ENCODE measurements at regions of chr1 and their contacts with region 1.

Region 1: DNA sequence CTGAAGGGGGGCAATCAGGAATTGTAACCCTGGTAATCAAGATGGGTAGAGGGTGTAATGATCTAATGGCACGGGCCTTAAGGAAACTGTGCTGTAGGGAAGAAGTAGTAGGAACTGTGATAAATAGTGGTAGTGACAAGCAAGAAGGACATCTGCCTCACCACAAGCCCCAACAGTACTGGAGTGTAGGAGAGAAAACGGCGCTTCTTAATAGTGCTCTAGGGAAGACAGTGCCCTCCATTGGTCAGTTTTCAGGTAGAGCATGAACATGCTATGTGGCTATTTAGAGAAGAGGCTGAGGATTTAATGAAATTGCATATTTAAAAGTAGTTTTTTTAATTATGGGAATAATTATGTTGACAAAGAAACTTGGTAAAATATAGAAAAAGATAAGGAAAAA is 32.2 kb downstream of the SLC30A7 start:
- DNase-seq: no peak
- ATAC-seq: peak in 1 of 4 donors; percentile 48
- H3K4me3 ChIP-seq: no peak overlapping the region
- H3K27ac ChIP-seq: peak overlapping the region in 1 of 12 donors; percentile 77
- H3K4me1 ChIP-seq: peaks cover 0 to 21% (median 0%) of the 10 kb centered on the region in 12 donors
- H3K27me3 ChIP-seq: no peaks in the 10 kb centered on the region
- CTCF ChIP-seq: peak in 3 of 12 donors; percentile 8 to 23 (median 21)
- POLR2A ChIP-seq: no peak

Region 2: GRCh38 chr1:101136739-101137138 is 208.6 kb after region 1 on chr1:
- intact Hi-C with region 1: loop called in 4 of 10 experiments (anchors 5 to 10 kb)
- DNase-seq: no peak
- ATAC-seq: peak; percentile 34 to 68 (median 59)
- H3K4me3 ChIP-seq: no peak overlapping the region
- H3K27ac ChIP-seq: peak overlapping the region in 3 of 12 donors; percentile 23 to 33 (median 25)
- H3K4me1 ChIP-seq: peaks cover 0 to 38% (median 21%) of the 10 kb centered on the region in 12 donors
- H3K27me3 ChIP-seq: no peaks in the 10 kb centered on the region
- CTCF ChIP-seq: peak in 9 of 12 donors; percentile 22 to 57 (median 43)
- POLR2A ChIP-seq: no peak

Region 3: GRCh38 chr1:101144671-101145448 is 216.7 kb after region 1 on chr1:
- intact Hi-C with region 1: loop called in 1 of 10 experiments (anchors 5 kb)
- DNase-seq: no peak
- ATAC-seq: no peak
- H3K4me3 ChIP-seq: no peak overlapping the region
- H3K27ac ChIP-seq: no peak overlapping the region
- H3K4me1 ChIP-seq: peaks cover 0 to 27% (median under 1%) of the 10 kb centered on the region in 12 donors
- H3K27me3 ChIP-seq: no peaks in the 10 kb centered on the region
- CTCF ChIP-seq: no peak
- POLR2A ChIP-seq: no peak

Region 4: DNA sequence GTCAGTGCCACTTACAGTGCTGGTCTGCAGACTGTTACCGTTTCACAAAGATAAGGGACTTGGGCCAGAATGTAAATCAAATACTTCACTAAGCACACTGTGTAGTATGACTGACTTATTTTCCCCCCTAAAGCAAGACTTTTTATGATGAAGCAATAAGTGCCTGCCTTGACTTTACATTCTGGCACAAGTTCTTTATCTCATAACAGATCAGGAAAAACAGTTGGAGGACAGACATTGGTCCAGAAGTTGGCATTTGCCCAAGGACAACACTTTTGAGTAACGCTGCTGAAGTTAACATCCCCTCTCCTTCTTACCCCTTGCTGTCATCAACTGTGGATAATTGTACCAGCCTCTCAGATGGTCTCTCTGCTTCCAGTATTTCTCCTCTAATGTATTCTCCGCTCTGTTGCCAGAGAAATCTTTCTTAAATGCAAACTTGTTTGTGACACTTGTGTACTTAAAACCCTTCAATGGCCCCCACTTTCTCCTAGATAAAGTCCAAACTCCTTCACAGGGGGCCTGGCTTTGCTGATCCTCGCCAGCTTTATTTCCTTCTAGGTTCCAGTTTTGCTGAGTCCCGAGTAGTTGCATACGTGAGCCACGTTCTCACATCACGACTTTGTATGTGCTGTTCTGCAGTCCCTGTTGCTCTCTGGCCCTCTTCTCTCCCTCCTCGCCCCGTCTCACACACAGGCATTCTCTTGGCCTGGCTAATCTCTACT is 354.3 kb after region 1 on chr1:
- intact Hi-C with region 1: loop called in 4 of 10 experiments (anchors 2 to 5 kb)
- DNase-seq: no peak
- ATAC-seq: no peak
- H3K4me3 ChIP-seq: no peak overlapping the region
- H3K27ac ChIP-seq: no peak overlapping the region
- H3K4me1 ChIP-seq: peaks cover 0 to 54% (median 0%) of the 10 kb centered on the region in 12 donors
- H3K27me3 ChIP-seq: no peaks in the 10 kb centered on the region
- CTCF ChIP-seq: no peak
- POLR2A ChIP-seq: no peak

Region 5: GRCh38 chr1:101357444-101357986 is 429.4 kb after region 1 on chr1:
- intact Hi-C with region 1: loop called in 7 of 10 experiments (anchors 5 to 10 kb)
- DNase-seq: peak in 3 of 5 donors; percentile 26 to 46 (median 44)
- ATAC-seq: peak; percentile 37 to 88 (median 87)
- H3K4me3 ChIP-seq: no peak overlapping the region
- H3K27ac ChIP-seq: no peak overlapping the region
- H3K4me1 ChIP-seq: no peaks in the 10 kb centered on the region
- H3K27me3 ChIP-seq: peaks cover 0 to 10% (median 0%) of the 10 kb centered on the region in 9 donors
- CTCF ChIP-seq: peak; percentile 70 to 90 (median 82)
- POLR2A ChIP-seq: no peak